HCT116 (cell line): ENCODE measurements at regions of chr1 and their contacts with region 1.

Region 1: DNA sequence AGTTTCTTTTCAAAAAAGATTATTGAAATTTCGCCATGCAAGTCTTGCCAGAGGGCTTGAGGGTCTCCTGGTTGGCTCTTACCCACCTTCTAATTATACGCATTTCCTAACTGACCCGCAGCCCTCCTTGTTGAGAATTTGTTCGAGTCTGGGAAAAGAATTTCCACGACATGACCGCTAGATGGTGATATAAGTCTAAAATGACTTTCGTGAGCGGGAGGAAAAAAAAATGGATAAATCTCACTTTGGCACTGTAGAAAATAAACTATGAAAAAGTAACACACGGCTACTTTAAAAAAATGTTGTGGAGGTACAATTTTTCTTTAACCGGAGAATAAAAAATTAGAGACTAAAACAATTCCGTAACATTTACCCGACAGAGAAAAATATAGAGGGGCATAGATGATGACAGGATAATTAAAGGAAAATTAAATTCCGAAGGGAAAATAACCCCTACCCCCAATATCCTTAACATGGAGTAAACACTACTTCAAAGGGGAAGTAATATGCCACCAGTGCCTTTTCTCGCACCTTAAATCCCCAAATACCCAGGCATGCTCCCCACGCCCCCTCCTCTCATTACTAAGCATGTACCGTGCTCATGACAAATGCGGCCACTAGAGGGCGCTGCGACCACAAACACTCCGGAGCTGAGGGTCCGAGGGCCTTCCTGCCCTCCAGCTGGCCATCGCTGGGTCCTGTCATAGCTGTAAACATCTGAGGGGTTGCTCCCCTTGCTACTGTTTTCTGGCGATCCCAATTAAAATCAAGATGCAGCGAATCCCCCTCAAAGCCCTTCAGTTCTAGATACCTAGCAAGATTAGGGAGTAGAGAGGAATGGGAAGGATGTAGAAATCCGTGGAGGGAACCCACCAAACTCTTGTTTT is 266.9 kb downstream of the ASTN1 start:
- DNase-seq: peak; percentile 39
- ATAC-seq: peak; percentile 95
- H3K4me3 ChIP-seq: no peak overlapping the region
- H3K27ac ChIP-seq: no peak overlapping the region
- H3K4me1 ChIP-seq: no peaks in the 10 kb centered on the region
- H3K27me3 ChIP-seq: peaks cover 29% of the 10 kb centered on the region
- CTCF ChIP-seq: peak; percentile 70 to 83 (median 81); a peak in 5 of 6 replicates
- POLR2A ChIP-seq: no peak
- RAD21 ChIP-seq: peak; percentile 67

Region 2: DNA sequence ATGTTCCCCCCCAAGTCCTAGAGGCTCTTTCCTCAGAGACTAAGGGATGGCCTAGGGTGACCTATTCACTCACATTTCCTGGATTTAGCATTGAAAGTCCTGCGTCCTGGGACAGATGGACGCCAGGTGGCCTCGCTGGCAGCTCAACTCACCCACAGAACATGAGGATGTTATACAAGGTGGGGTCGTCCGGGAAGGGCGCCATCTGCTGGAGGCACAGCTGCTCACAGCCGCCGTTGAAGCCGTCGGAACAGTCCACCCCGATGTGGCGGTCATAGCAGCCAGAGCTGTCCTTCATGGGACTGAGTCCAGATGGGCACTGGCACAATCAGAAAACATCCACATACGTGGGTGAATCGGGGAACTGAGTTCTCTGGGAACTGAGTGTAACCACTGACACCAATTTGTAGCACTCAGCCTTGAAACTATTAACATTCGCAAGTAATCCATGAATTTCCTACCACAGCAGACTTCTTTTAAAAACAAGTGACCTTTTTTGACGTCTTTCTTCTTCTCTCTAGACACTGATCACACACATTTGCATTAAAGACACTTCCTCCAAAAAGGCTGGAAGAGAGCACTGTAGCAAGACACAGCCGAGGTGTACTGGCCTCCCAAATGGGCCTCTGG is 51.6 kb after region 1 on chr1:
- CTCF ChIA-PET with region 1: interaction called, 13 read pairs
- POLR2A ChIA-PET with region 1: no interaction called
- RAD21 ChIA-PET with region 1: no interaction called
- intact Hi-C with region 1: loop called (anchors 1 kb)
- DNase-seq: peak; percentile 63
- ATAC-seq: peak; percentile 99
- H3K4me3 ChIP-seq: no peak overlapping the region
- H3K27ac ChIP-seq: no peak overlapping the region
- H3K4me1 ChIP-seq: no peaks in the 10 kb centered on the region
- H3K27me3 ChIP-seq: peaks cover 16% of the 10 kb centered on the region
- CTCF ChIP-seq: peak; percentile 86 to 99 (median 91)
- POLR2A ChIP-seq: no peak
- RAD21 ChIP-seq: peak; percentile 70

Region 3: DNA sequence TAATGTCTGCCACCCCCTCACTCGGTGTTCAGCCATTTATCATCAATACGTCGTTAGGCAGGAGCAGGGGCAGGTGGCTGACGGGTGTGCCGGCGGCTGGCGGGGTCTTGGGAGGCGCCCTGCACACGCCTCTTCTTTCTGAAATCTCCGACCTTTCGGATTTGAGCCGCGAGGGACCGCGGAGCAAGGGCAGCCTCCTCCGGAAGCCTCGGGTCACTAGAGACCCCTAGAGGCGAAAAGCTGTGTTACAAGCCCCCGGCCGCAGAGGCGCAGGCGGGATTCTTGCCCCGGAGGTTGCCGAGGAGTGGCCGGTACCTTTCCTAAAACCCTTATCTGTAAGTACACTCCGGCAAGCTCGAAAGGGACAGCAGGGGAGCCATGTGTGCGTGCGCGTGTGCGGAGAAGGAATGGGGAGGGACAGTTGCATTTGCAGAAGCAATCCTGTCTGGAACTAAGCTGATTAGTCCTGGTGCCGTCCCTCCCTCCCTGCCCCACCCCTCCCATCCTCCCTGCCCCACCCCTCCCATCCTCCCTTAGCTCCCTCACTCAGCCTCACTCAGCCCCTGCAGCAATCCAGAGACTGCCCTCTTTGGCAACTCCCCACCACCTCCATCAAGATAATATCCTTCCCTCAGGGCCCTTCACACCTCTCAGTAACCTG is 284.2 kb after region 1 on chr1:
- CTCF ChIA-PET with region 1: interaction called, 7 read pairs
- POLR2A ChIA-PET with region 1: no interaction called
- RAD21 ChIA-PET with region 1: interaction called in 1 of 2 experiments, 3 read pairs
- intact Hi-C with region 1: loop called (anchors 2 kb)
- DNase-seq: peak; percentile 33
- ATAC-seq: peak; percentile 97
- H3K4me3 ChIP-seq: peak overlapping the region in 1 of 2 experiments; percentile 16; a peak in 1 of 4 replicates
- H3K27ac ChIP-seq: no peak overlapping the region
- H3K4me1 ChIP-seq: peaks cover 0 to 4% of the 10 kb centered on the region in 2 experiments; a peak in 1 of 4 replicates
- H3K27me3 ChIP-seq: 0 out of 2 replicates have a peak, but pooled peaks cover 13% of the 10 kb centered on the region
- CTCF ChIP-seq: peak; percentile 54 to 84 (median 77)
- POLR2A ChIP-seq: no peak
- RAD21 ChIP-seq: peak; percentile 69

Region 4: GRCh38 chr1:177355595-177355994 is 458.0 kb after region 1 on chr1:
- CTCF ChIA-PET with region 1: interaction called, 4 read pairs
- POLR2A ChIA-PET with region 1: no interaction called
- RAD21 ChIA-PET with region 1: no interaction called
- intact Hi-C with region 1: loop called (anchors 1 kb)
- DNase-seq: no peak
- ATAC-seq: peak; percentile 75
- H3K4me3 ChIP-seq: no peak overlapping the region
- H3K27ac ChIP-seq: no peak overlapping the region
- H3K4me1 ChIP-seq: no peaks in the 10 kb centered on the region
- H3K27me3 ChIP-seq: peaks cover 12% of the 10 kb centered on the region; the same call in 1 of the 2 replicates
- CTCF ChIP-seq: peak; percentile 25 to 55 (median 48); a peak in 5 of 6 replicates
- POLR2A ChIP-seq: no peak
- RAD21 ChIP-seq: peak; percentile 45

Region 5: GRCh38 chr1:177783052-177783451 is 885.5 kb after region 1 on chr1:
- CTCF ChIA-PET with region 1: interaction called, 4 read pairs
- POLR2A ChIA-PET with region 1: no interaction called
- RAD21 ChIA-PET with region 1: no interaction called
- intact Hi-C with region 1: loop called (anchors 2 kb)
- DNase-seq: no peak
- ATAC-seq: 0 out of 2 replicates have a peak, but pooled peaks have one; percentile 49
- H3K4me3 ChIP-seq: no peak overlapping the region
- H3K27ac ChIP-seq: no peak overlapping the region
- H3K4me1 ChIP-seq: no peaks in the 10 kb centered on the region
- H3K27me3 ChIP-seq: peaks cover 13% of the 10 kb centered on the region
- CTCF ChIP-seq: peak in 2 of 3 experiments; percentile 49 to 50; a peak in 5 of 6 replicates
- POLR2A ChIP-seq: no peak
- RAD21 ChIP-seq: no peak

Region 6: GRCh38 chr1:177913762-177914540 is 1016.4 kb after region 1 on chr1:
- CTCF ChIA-PET with region 1: no interaction called
- POLR2A ChIA-PET with region 1: no interaction called
- RAD21 ChIA-PET with region 1: no interaction called
- intact Hi-C with region 1: loop called (anchors 2 kb)
- DNase-seq: peak; percentile 13
- ATAC-seq: peak; percentile 81
- H3K4me3 ChIP-seq: no peak overlapping the region
- H3K27ac ChIP-seq: no peak overlapping the region
- H3K4me1 ChIP-seq: peaks cover 0 to 10% of the 10 kb centered on the region in 2 experiments; a peak in 2 of 4 replicates
- H3K27me3 ChIP-seq: peaks cover 18% of the 10 kb centered on the region
- CTCF ChIP-seq: peak; percentile 22 to 64 (median 63); a peak in 5 of 6 replicates
- POLR2A ChIP-seq: no peak
- RAD21 ChIP-seq: peak; percentile 56